ENCODE measurements at regions of chr6 and their contacts with region 1.

Region 1: GRCh38 chr6:41367700-41368099 is 32.3 kb downstream of the NCR2 start:
- DNase-seq: no peak
- H3K4me3 ChIP-seq: no peak overlapping the region
- CTCF ChIP-seq: peak; percentile 87

Region 2: GRCh38 chr6:41269716-41270115 is 98.0 kb before region 1 on chr6:
- CTCF ChIA-PET with region 1: no interaction called
- POLR2A ChIA-PET with region 1: no interaction called
- DNase-seq: no peak
- H3K4me3 ChIP-seq: no peak overlapping the region
- CTCF ChIP-seq: no peak

Region 3: DNA sequence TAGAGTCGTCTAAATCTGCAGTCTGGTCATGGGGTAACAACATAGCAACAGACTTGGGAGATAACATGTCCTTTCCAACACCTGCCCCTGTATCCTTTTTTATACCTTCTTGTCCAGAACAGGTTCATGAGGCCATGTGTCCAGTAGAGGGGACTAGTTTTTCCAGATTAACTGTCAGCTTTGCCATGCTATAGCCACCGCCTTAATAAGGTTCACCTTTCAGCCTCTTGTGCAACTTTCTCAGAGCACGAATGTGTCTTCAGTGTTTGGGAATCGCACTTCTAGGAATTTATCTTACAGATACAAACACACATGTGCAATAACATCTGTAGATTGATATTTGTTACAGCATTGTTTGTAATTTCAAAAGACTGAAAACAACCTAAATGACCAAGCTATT is 10.9 kb before region 1 on chr6:
- CTCF ChIA-PET with region 1: interaction called, 16 read pairs
- POLR2A ChIA-PET with region 1: no interaction called
- DNase-seq: no peak
- H3K4me3 ChIP-seq: no peak overlapping the region
- CTCF ChIP-seq: no peak

Region 4: DNA sequence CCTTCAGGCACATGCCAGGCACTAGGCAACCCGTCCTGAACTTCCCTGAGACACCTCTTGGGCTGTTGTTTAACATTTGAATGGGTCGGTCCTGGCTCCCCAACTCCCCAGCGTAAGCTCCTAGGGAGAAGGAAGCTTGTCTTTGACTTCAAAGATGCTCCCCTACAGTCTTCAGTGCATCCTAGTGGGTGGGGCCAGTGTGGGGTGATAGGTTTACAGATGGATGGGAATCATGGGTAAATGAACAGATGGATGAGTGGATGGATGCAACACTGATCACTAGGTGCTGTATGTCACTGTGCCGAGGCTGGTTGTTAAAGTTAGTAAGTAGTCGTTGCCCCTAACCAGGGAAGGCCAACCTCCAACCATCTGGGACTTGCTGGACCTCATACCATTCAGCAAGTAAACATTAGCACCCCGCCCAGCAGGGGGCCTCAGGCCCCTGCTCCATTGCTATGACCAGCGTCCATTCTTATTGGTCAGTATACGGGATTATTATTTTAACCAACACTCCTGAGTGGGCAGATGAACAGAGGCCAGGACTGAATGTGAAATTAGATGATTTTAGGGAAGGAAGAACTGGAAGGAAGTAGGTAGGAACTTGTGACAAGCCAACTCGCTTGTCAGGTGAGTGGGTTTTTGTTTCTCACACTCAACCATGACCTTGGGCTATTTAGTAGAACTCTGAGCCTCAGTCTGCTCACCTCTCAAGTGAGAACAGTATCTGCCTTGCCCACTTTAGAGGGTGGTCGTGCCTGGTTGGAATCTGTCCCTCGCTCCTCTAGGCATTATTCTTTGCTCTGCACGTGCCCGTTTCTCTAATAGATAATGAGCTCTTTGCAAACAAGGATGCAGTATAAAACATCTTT is 95.6 kb after region 1 on chr6:
- CTCF ChIA-PET with region 1: interaction called, 17 read pairs
- POLR2A ChIA-PET with region 1: no interaction called
- DNase-seq: no peak
- H3K4me3 ChIP-seq: no peak overlapping the region
- CTCF ChIP-seq: peak; percentile 59

Region 5: DNA sequence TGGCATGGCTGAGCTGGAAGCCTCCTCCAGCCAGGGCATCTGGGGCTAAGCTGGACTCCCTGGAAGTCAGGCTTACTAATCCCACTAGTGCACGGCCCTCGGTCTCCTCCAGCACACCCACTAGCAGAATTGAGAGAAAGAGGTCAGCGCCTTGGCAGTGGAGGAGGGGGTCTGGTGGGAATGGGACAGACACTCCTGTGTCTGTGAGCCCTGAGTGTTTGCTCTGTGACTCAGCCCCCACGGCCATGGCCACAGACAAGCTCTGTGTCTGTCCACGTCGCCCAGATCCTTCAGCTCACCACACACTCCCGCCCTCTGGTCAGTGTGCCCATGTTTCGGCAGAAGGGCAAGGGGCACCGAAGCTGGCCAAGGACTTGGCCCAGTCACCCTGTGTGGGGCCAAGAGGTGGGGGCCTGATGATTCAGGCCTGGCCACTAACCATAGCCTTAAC is 279.4 kb after region 1 on chr6:
- CTCF ChIA-PET with region 1: interaction called, 17 read pairs
- POLR2A ChIA-PET with region 1: no interaction called
- DNase-seq: no peak
- H3K4me3 ChIP-seq: no peak overlapping the region
- CTCF ChIP-seq: no peak

Region 6: DNA sequence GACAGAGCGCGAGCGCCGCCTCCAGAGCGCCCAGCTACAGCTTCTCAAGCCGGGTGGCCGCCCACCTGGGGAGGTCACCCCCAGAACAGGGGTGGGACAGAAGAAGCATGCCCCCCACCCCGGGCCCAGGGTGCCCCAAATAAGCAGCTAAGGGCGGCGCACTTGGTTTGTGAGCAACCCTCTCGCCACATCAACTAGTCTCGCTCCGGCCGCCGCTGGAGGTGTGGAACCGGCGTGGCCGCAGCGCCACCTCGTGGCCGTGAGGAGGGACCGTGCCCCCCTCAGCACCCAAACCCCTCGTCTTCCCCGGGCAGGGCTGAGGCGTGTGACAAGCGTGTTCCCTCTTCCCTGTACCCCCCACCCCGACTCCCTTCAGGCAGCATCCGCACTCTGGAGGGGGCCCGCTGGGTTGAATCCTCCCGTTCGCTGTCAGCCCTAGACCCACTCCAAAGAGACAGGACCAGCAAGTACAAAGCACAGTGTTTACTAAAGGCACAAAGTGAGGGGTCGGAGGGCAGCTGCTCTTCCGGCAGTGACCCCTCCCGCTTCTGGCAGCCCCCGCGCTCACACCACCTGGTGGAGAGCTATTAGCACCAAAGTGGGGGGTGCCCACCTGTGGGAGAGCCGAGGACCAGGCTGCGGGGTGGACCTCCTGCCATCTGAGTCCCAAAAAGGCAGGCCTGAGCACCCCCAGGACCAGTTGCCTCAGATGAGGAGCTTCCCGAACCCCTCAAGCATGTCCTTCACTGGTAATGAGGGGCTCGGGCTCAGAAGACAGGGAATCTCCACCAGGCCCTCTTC is 316.0 kb after region 1 on chr6:
- CTCF ChIA-PET with region 1: interaction called, 414 read pairs
- POLR2A ChIA-PET with region 1: no interaction called
- DNase-seq: no peak
- H3K4me3 ChIP-seq: peak overlapping the region; percentile 38
- CTCF ChIP-seq: peak; percentile 97

Region 7: DNA sequence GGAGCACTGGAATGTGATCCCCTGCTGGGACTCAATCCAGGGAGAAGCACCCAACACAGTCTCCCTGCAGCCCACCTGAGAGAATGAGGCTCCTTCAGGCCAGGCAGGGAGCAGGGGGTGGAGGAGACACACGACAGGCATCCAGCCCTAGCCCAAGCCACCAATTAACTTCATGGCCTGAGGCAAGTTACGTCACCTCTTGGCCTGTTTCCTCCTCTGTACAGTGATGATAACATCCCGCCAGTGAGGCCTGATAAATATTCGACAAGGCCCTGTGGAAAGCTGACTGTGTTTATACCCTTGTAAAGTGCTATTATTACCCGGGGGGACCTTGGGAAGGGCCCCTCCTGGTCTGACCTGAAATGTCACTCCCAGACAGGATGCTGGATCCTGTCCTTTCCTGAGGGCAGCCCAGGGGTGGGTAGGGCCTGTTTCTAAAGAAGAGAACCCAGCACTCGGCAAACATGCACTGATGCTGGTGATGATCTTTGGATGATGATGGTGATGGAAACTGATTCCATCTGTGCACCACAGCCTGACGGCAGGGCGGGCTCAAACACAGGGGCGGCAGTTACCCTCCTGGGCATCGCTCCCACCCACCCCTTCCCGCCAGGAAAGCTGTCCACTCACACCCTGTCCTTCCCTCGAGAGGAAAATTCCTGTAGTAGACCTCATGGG is 399.6 kb after region 1 on chr6:
- CTCF ChIA-PET with region 1: interaction called, 90 read pairs
- POLR2A ChIA-PET with region 1: no interaction called
- DNase-seq: peak; percentile 24
- H3K4me3 ChIP-seq: no peak overlapping the region
- CTCF ChIP-seq: no peak

Region 8: GRCh38 chr6:42043787-42044475 is 676.2 kb after region 1 on chr6:
- CTCF ChIA-PET with region 1: interaction called, 23 read pairs
- POLR2A ChIA-PET with region 1: no interaction called
- DNase-seq: no peak
- H3K4me3 ChIP-seq: no peak overlapping the region; the same call in 1 of the 2 replicates
- CTCF ChIP-seq: peak; percentile 94